ENCODE measurements at regions of chr12 and their contacts with region 1.

Region 1: DNA sequence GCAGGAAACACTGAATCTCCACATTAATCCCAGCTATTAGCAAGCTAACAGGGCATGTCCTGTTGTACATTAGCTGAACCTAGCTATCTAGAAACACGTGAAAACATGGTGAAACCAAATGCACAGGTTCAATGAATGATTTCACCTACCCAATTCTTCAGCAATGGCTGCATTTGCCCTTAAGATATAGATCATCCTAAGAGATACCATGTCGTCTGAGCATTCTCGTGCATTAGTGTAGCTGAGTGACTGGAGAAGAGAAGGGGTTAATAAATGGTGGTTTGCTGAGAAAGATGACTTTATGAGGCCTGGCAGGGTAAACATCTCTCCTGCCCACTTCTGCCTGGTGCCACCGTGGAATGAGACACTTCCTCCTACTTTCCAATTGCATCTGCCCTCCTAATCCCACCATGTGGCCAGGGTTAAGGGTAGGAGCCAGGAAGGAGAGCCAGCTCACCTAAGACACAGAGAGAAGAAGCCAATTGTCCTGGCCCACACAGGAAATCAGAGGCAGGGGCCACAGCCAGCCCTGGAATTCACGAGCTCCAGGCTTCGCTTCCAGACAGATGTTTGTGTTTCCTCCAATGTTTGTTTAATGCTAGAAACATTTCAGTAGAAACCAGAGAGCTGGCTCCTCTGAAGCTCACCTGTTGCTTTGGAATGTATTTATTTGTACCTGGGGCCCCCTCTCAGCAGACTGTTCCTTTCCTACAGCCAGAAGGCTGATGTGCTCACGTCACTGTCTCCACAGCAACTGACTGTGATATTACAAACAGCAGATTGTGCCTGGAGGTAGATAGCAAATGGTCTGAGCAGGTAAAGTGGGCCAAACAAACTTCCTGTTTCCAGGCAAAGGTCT is 126.0 kb upstream of the PARP11 start:
- DNase-seq: no peak
- H3K4me3 ChIP-seq: no peak overlapping the region
- H3K27ac ChIP-seq: no peak overlapping the region
- H3K4me1 ChIP-seq: peaks cover 0 to 3% (median 0%) of the 10 kb centered on the region in 4 donors
- H3K27me3 ChIP-seq: peaks cover 0 to 13% of the 10 kb centered on the region in 2 donors
- CTCF ChIP-seq: no peak

Region 2: GRCh38 chr12:3885277-3886094 is 113.7 kb before region 1 on chr12:
- intact Hi-C with region 1: loop called (anchors 10 kb)
- DNase-seq: peak in 1 of 2 donors; percentile 24
- H3K4me3 ChIP-seq: peak overlapping the region; percentile 35 to 51
- H3K27ac ChIP-seq: peak overlapping the region; percentile 65 to 68
- H3K4me1 ChIP-seq: no peaks in the 10 kb centered on the region
- H3K27me3 ChIP-seq: peaks cover 0 to 10% of the 10 kb centered on the region in 2 donors
- CTCF ChIP-seq: peak; percentile 78 to 90

Region 3: GRCh38 chr12:4027412-4027811 is 28.2 kb after region 1 on chr12:
- intact Hi-C with region 1: no loop called
- DNase-seq: no peak
- H3K4me3 ChIP-seq: no peak overlapping the region
- H3K27ac ChIP-seq: no peak overlapping the region
- H3K4me1 ChIP-seq: peaks cover 0 to 12% (median 11%) of the 10 kb centered on the region in 4 donors
- H3K27me3 ChIP-seq: no peaks in the 10 kb centered on the region
- CTCF ChIP-seq: no peak

Region 4: DNA sequence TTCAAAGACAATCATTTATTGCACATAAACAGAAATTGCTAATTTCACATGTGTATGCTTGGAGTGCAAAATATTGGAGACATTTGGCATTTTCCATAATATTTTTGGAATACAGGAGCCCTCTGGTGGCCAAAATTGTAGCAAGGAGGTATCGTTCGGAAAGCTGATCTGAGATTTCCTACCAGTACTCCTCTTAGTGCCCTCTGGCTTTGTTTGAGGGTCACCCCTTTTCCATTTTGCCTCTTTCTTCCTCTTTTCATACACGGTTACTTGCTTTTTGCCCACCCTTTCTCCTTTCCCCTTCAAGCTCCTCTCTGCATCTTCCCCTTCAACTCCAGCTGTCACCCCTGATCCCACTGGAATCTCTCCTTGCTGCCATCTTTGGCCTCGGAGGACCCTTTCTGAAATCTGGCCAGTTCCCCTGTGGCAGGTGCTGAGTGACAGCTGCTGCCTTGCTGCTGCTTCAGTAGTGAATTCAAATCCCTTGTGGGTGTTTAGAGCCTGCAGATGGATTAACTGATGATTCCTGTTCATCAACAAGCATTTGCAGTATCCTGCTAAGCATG is 38.6 kb after region 1 on chr12:
- intact Hi-C with region 1: loop called (anchors 5 kb)
- DNase-seq: peak in 1 of 2 donors; percentile 48
- H3K4me3 ChIP-seq: no peak overlapping the region
- H3K27ac ChIP-seq: no peak overlapping the region
- H3K4me1 ChIP-seq: no peaks in the 10 kb centered on the region
- H3K27me3 ChIP-seq: no peaks in the 10 kb centered on the region
- CTCF ChIP-seq: peak; percentile 74 to 82

Region 5: GRCh38 chr12:4099276-4099675 is 100.1 kb after region 1 on chr12:
- intact Hi-C with region 1: no loop called
- DNase-seq: no peak
- H3K4me3 ChIP-seq: no peak overlapping the region
- H3K27ac ChIP-seq: no peak overlapping the region
- H3K4me1 ChIP-seq: no peaks in the 10 kb centered on the region
- H3K27me3 ChIP-seq: peaks cover 0 to 6% of the 10 kb centered on the region in 2 donors
- CTCF ChIP-seq: no peak